Calu3 (cell line): ENCODE measurements at regions of chr1 and their contacts with region 1.

Region 1: GRCh38 chr1:32521165-32521564 is 18.1 kb upstream of the ZBTB8A start:
- DNase-seq: no peak
- H3K4me3 Mint-ChIP-seq: peak overlapping the region; percentile 63
- H3K27ac Mint-ChIP-seq: no peak overlapping the region
- H3K4me1 Mint-ChIP-seq: no peaks in the 10 kb centered on the region
- H3K27me3 Mint-ChIP-seq: no peaks in the 10 kb centered on the region
- CTCF ChIP-seq: no peak

Region 2: GRCh38 chr1:32612189-32612881 is 91.2 kb after region 1 on chr1:
- CTCF ChIA-PET with region 1: no interaction called
- intact Hi-C with region 1: loop called (anchors 10 kb)
- DNase-seq: peak; percentile 93
- H3K4me3 Mint-ChIP-seq: peak overlapping the region; percentile 69
- H3K27ac Mint-ChIP-seq: peak overlapping the region; percentile 86
- H3K4me1 Mint-ChIP-seq: peaks cover 9% of the 10 kb centered on the region
- H3K27me3 Mint-ChIP-seq: no peaks in the 10 kb centered on the region
- CTCF ChIP-seq: peak; percentile 15

Region 3: GRCh38 chr1:32953495-32953894 is 432.3 kb after region 1 on chr1:
- CTCF ChIA-PET with region 1: interaction called, 10 read pairs
- intact Hi-C with region 1: no loop called
- DNase-seq: no peak
- H3K4me3 Mint-ChIP-seq: no peak overlapping the region
- H3K27ac Mint-ChIP-seq: peak overlapping the region; percentile 91
- H3K4me1 Mint-ChIP-seq: peaks cover 38% of the 10 kb centered on the region
- H3K27me3 Mint-ChIP-seq: no peaks in the 10 kb centered on the region
- CTCF ChIP-seq: no peak